ENCODE measurements at regions of chr20 and their contacts with region 1.

Region 1: GRCh38 chr20:18287915-18288748 is at the start of gene ZNF133:
- DNase-seq: peak; percentile 96
- ATAC-seq: peak; percentile 98
- H3K4me3 ChIP-seq: peak within 1 kb of the TSS; percentile 76 to 93 (median 85)
- H3K27ac ChIP-seq: peak within 1 kb of the TSS; percentile 87
- H3K4me1 ChIP-seq: peaks cover 20% of the 10 kb centered on the region
- H3K27me3 ChIP-seq: no peaks in the 10 kb centered on the region; a peak in 1 of 5 replicates
- CTCF ChIP-seq: peak; percentile 75
- EP300 ChIP-seq: peak; percentile 11 to 23; a peak in 1 of 4 replicates
- POLR2A ChIP-seq: peak; percentile 97
- RAD21 ChIP-seq: peak; percentile 48; the same call in 1 of the 2 replicates
- total RNA-seq, gene ZNF133: 25.9 and 26.7 TPM in 2 replicates

Region 2: GRCh38 chr20:18137412-18138265 is 150.5 kb before region 1 on chr20 and contains the starts of genes KAT14 and PET117:
- CTCF ChIA-PET with region 1: no interaction called
- POLR2A ChIA-PET with region 1: interaction called, 33 read pairs
- in situ Hi-C with region 1: no loop called
- intact Hi-C with region 1: loop called (anchors 2 kb)
- DNase-seq: peak; percentile 85
- ATAC-seq: peak; percentile 94
- H3K4me3 ChIP-seq: peak within 1 kb of the TSS; percentile 87 to 92 (median 91)
- H3K27ac ChIP-seq: peak within 1 kb of the TSS; percentile 88
- H3K4me1 ChIP-seq: peaks cover 37% of the 10 kb centered on the region
- H3K27me3 ChIP-seq: no peaks in the 10 kb centered on the region; a peak in 2 of 5 replicates
- CTCF ChIP-seq: peak; percentile 30
- EP300 ChIP-seq: peak; percentile 64 to 76; a peak in 3 of 4 replicates
- POLR2A ChIP-seq: peak; percentile 94 to 96
- RAD21 ChIP-seq: peak; percentile 80
- total RNA-seq, gene KAT14: 15.1 and 15.7 TPM in 2 replicates
- total RNA-seq, gene PET117: 48.2 and 52.3 TPM in 2 replicates

Region 3: GRCh38 chr20:18299364-18299763 is 11.2 kb after region 1 on chr20:
- CTCF ChIA-PET with region 1: no interaction called
- POLR2A ChIA-PET with region 1: interaction called, 10 read pairs
- in situ Hi-C with region 1: no loop called
- intact Hi-C with region 1: no loop called
- DNase-seq: no peak
- ATAC-seq: no peak
- H3K4me3 ChIP-seq: no peak overlapping the region
- H3K27ac ChIP-seq: no peak overlapping the region
- H3K4me1 ChIP-seq: no peaks in the 10 kb centered on the region
- H3K27me3 ChIP-seq: no peaks in the 10 kb centered on the region
- CTCF ChIP-seq: no peak
- EP300 ChIP-seq: no peak
- POLR2A ChIP-seq: no peak
- RAD21 ChIP-seq: no peak

Region 4: DNA sequence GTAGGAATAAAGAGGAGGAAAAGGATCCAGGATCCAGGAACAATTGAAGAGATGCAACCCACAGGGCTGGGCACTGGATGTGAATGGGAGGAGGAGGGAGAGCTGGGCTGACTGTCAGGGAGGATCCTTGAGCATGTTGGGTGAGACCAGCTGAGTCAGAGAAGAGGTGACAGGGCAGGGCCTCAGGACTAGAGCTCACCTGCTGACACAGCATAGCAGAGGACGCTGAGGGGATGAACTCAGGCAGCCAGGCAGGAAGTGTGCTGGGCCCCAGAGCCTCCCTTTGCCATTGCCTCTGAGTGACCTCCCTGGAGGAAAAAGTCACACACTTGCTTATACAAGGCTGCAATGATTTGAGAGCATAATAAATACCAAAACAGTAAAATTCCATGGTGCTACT is 72.5 kb after region 1 on chr20:
- CTCF ChIA-PET with region 1: no interaction called
- POLR2A ChIA-PET with region 1: no interaction called
- in situ Hi-C with region 1: no loop called
- intact Hi-C with region 1: no loop called
- DNase-seq: no peak
- ATAC-seq: peak; percentile 71
- H3K4me3 ChIP-seq: no peak overlapping the region
- H3K27ac ChIP-seq: no peak overlapping the region
- H3K4me1 ChIP-seq: no peaks in the 10 kb centered on the region
- H3K27me3 ChIP-seq: no peaks in the 10 kb centered on the region; a peak in 1 of 5 replicates
- CTCF ChIP-seq: no peak
- EP300 ChIP-seq: no peak
- POLR2A ChIP-seq: no peak
- RAD21 ChIP-seq: no peak

Region 5: GRCh38 chr20:18388860-18389259 is 100.7 kb after region 1 on chr20:
- CTCF ChIA-PET with region 1: no interaction called
- POLR2A ChIA-PET with region 1: interaction called, 30 read pairs
- in situ Hi-C with region 1: no loop called
- intact Hi-C with region 1: loop called (anchors 10 kb)
- DNase-seq: peak; percentile 95
- ATAC-seq: peak; percentile 89
- H3K4me3 ChIP-seq: no peak overlapping the region
- H3K27ac ChIP-seq: peak overlapping the region; percentile 9
- H3K4me1 ChIP-seq: peaks cover 30% of the 10 kb centered on the region
- H3K27me3 ChIP-seq: no peaks in the 10 kb centered on the region
- CTCF ChIP-seq: no peak
- EP300 ChIP-seq: peak in 1 of 2 experiments; percentile 72; a peak in 1 of 4 replicates
- POLR2A ChIP-seq: no peak
- RAD21 ChIP-seq: no peak

Region 6: GRCh38 chr20:18496740-18497592 is 208.8 kb after region 1 on chr20 and contains the start of gene RBBP9:
- CTCF ChIA-PET with region 1: no interaction called
- POLR2A ChIA-PET with region 1: interaction called, 14 read pairs
- in situ Hi-C with region 1: no loop called
- intact Hi-C with region 1: no loop called
- DNase-seq: peak; percentile 84
- ATAC-seq: peak; percentile 100
- H3K4me3 ChIP-seq: peak within 1 kb of the TSS; percentile 91 to 99 (median 92)
- H3K27ac ChIP-seq: peak within 1 kb of the TSS; percentile 73
- H3K4me1 ChIP-seq: peaks cover 32% of the 10 kb centered on the region
- H3K27me3 ChIP-seq: no peaks in the 10 kb centered on the region; a peak in 1 of 5 replicates
- CTCF ChIP-seq: peak; percentile 29; the same call in 1 of the 2 replicates
- EP300 ChIP-seq: peak; percentile 31 to 35; a peak in 1 of 4 replicates
- POLR2A ChIP-seq: peak; percentile 92 to 97
- RAD21 ChIP-seq: peak; percentile 51; the same call in 1 of the 2 replicates
- total RNA-seq, gene RBBP9: 56.3 and 99.5 TPM in 2 replicates

Region 7: DNA sequence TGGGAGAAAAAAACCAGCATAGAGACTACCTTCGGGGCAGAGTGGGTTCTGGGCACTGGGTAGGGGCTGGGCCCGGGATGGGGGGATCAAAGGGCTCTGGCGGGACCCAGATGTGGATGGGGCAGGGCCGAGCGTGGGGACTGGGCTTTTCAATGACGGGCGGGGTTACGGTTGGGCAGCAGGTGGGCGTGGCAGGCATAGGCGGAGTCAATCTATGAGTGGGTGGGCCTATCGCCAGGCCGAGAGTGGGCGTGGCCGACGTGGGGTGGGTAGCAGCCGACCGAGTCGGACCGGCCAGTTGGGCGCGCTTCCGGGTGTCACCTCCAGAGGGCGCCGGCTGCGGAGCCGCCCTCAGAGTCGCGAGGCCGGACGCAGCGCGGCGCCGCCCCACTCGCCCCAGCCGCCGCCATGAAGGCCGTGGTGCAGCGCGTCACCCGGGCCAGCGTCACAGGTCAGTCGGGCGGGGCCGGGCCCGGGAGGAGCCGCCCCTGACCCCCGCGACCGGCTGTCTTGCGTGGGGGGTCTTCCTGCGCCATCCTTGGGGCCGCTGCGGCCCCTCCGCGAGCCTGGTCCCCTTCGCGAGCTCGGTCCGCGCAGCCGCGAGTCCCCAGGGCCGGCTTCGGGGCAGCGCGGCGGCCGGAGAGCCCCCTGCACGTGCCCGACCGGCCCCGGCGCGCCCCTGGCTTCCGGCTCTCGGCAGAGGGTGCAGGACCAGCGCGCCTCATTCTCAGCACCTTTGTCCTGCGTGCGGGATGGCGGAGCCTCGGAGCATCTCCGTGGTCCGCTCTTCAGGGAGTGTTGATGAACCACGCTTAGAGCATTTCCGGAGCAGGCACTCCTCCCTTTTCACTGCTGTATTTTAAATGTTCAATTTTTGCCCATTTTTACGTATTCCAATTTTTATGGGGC is 299.8 kb after region 1 on chr20 and contains the start of gene DTD1:
- CTCF ChIA-PET with region 1: no interaction called
- POLR2A ChIA-PET with region 1: interaction called, 13 read pairs
- in situ Hi-C with region 1: no loop called
- intact Hi-C with region 1: no loop called
- DNase-seq: peak; percentile 84
- ATAC-seq: peak; percentile 90
- H3K4me3 ChIP-seq: peak within 1 kb of the TSS; percentile 67 to 80 (median 80)
- H3K27ac ChIP-seq: peak within 1 kb of the TSS; percentile 36
- H3K4me1 ChIP-seq: peaks cover 50% of the 10 kb centered on the region
- H3K27me3 ChIP-seq: no peaks in the 10 kb centered on the region
- CTCF ChIP-seq: peak; percentile 88
- EP300 ChIP-seq: no peak
- POLR2A ChIP-seq: peak; percentile 62 to 76
- RAD21 ChIP-seq: peak; percentile 88
- total RNA-seq, gene DTD1: 79.3 and 85.5 TPM in 2 replicates

Measured in HepG2 (cell line).